Activated CD8-positive, alpha-beta T cell treated with anti-CD3 and anti-CD28 coated beads, Interleukin-2, amount 10 ng/mL, durations not matched to agents 7 days and 5 days (primary cell): ENCODE measurements at regions of chr5 and their contacts with region 1.

Region 1: DNA sequence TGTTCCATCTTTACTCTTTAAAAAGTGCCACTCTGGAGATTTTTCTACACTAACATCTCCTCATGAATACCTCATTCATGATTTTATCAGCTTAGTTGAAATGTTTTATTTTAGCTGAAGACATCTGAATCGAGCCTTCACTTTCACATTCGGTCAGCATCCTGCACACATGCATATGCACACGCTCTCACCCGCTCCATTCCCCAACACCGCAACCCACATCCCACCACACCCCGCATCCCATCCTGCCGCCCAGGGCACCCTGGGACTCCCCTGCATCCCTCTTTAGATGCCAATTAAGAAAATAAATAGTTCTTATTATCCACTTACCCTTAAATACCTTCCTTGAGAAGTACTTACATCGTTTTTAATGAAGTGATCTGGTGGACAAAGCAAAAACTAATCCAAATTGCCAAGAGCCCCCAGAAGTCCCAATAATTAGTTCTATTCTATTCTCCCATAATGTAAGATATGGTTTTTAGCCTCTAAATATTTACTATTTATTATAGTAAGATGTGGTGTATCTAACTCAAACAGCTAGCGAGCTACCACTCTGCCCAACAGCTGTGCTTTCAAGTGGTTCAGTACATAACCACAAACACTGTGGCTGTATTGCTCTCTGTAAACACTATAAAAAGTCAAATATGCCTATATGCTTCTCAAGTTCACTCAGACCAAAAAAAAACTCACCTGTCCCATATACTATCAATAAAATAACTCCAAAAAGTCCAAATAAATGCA is 38.2 kb downstream of the GZMK start:
- DNase-seq: peak; percentile 89
- ATAC-seq: peak; percentile 84
- H3K4me3 Mint-ChIP-seq: peak overlapping the region; percentile 64
- H3K27ac Mint-ChIP-seq: peak overlapping the region; percentile 95
- H3K4me1 Mint-ChIP-seq: peaks cover 78% of the 10 kb centered on the region
- H3K27me3 Mint-ChIP-seq: peaks cover 2% of the 10 kb centered on the region

Region 2: GRCh38 chr5:55072666-55073065 is 10.5 kb after region 1 on chr5:
- CTCF ChIA-PET with region 1: interaction called, 17 read pairs
- POLR2A ChIA-PET with region 1: interaction called, 6 read pairs
- DNase-seq: peak; percentile 36
- ATAC-seq: peak; percentile 90
- H3K4me3 Mint-ChIP-seq: peak overlapping the region; percentile 60
- H3K27ac Mint-ChIP-seq: peak overlapping the region; percentile 87
- H3K4me1 Mint-ChIP-seq: peaks cover 60% of the 10 kb centered on the region
- H3K27me3 Mint-ChIP-seq: no peaks in the 10 kb centered on the region

Region 3: GRCh38 chr5:55102348-55102747 is 40.1 kb after region 1 on chr5 and contains the start of gene GZMA:
- CTCF ChIA-PET with region 1: interaction called, 14 read pairs
- POLR2A ChIA-PET with region 1: interaction called, 6 read pairs
- DNase-seq: peak; percentile 68
- ATAC-seq: peak; percentile 78
- H3K4me3 Mint-ChIP-seq: peak within 1 kb of the TSS; percentile 84
- H3K27ac Mint-ChIP-seq: peak within 1 kb of the TSS; percentile 94
- H3K4me1 Mint-ChIP-seq: peaks cover 86% of the 10 kb centered on the region
- H3K27me3 Mint-ChIP-seq: peaks cover 2% of the 10 kb centered on the region
- total RNA-seq, gene GZMA: 356 to 365 TPM

Region 4: DNA sequence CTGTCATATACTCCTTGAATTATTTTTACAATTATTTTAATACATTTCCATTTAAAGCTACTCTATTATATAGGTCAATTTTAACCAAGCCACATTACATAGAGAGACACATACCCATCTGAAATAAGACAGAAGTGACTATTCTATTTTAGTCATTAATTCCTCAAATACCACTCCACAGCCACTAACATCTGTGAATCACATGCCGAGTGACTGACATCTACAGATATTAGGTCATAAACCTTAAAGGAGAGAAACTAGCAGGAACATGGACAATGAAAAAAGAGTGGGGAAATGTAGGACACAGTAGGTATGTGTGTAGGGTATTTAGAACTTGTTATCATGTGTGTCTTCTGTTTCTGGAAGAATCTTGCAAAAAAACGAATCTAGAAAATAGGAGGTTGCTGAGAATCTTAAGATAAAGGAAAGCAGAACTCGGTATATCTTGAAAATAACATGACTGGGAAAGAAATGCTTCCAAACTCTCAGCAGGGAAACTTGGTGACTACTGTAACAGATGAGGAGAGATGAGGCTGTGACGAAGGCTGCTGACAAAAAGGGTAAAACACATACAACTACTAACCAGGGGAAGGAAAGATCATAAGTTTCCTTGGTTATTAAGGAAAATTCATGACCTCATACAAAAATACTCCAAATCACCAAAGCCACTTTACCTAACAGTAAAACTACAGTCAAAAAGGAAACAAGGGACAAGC is 388.0 kb after region 1 on chr5:
- CTCF ChIA-PET with region 1: no interaction called
- POLR2A ChIA-PET with region 1: no interaction called
- DNase-seq: no peak
- ATAC-seq: no peak
- H3K4me3 Mint-ChIP-seq: no peak overlapping the region
- H3K27ac Mint-ChIP-seq: no peak overlapping the region
- H3K4me1 Mint-ChIP-seq: peaks cover 5% of the 10 kb centered on the region
- H3K27me3 Mint-ChIP-seq: no peaks in the 10 kb centered on the region